Thyroid gland (tissue), 4 donors: ENCODE measurements at regions of chr7 and their contacts with region 1.

Region 1: DNA sequence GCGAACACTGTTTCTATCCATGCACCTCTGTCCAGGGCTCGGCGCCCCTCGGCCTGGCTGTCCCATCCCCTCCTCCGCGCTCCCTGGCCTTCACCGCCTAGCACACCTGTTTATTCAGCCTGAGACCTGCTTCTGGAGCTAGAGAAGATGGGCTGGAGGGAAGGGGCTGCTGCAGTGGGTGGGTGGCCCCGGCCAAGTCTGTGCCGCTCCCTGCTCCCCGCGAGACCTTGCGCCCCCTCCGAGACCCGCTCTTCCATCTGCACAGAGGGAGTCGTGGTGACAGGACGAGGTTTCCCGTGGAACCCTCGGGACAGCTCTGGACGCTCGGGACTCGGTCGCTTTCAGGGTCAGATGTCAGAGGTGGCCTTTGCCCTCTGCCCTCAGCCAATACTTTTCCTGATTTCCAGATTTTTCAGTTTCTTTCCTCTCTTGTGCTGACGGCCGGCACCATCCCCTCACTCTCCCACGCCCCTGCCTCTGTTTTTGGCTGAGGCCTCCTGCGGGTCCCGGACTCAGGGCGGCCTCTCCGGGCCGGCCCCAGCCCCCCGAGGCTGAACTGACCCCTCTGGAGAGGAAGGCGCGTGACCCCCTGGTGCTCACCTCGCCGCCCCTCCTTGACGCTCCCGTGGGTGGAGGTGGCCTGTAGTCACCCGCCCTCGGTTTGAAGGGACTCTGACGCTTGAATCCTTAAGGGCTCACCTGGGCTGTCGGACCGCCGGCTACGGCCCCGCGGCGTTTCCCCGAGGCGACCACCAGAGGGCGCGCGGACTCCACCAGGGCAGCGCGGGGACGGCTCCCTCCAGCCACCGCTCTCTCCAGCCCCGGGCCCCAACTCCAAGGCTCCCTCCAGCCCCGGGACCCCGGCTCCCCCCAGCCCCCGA is 15.6 kb downstream of the SHH start:
- DNase-seq: peak; percentile 63 to 64
- H3K4me3 ChIP-seq: no peak overlapping the region
- H3K27ac ChIP-seq: no peak overlapping the region
- H3K4me1 ChIP-seq: peaks cover 0 to 5% of the 10 kb centered on the region in 2 donors
- H3K27me3 ChIP-seq: no peaks in the 10 kb centered on the region
- CTCF ChIP-seq: peak; percentile 45 to 95 (median 81)
- POLR2A ChIP-seq: no peak

Region 2: GRCh38 chr7:155685070-155685790 is 111.4 kb before region 1 on chr7:
- intact Hi-C with region 1: no loop called
- DNase-seq: no peak
- H3K4me3 ChIP-seq: no peak overlapping the region
- H3K27ac ChIP-seq: no peak overlapping the region
- H3K4me1 ChIP-seq: no peaks in the 10 kb centered on the region
- H3K27me3 ChIP-seq: no peaks in the 10 kb centered on the region
- CTCF ChIP-seq: no peak
- POLR2A ChIP-seq: no peak

Region 3: DNA sequence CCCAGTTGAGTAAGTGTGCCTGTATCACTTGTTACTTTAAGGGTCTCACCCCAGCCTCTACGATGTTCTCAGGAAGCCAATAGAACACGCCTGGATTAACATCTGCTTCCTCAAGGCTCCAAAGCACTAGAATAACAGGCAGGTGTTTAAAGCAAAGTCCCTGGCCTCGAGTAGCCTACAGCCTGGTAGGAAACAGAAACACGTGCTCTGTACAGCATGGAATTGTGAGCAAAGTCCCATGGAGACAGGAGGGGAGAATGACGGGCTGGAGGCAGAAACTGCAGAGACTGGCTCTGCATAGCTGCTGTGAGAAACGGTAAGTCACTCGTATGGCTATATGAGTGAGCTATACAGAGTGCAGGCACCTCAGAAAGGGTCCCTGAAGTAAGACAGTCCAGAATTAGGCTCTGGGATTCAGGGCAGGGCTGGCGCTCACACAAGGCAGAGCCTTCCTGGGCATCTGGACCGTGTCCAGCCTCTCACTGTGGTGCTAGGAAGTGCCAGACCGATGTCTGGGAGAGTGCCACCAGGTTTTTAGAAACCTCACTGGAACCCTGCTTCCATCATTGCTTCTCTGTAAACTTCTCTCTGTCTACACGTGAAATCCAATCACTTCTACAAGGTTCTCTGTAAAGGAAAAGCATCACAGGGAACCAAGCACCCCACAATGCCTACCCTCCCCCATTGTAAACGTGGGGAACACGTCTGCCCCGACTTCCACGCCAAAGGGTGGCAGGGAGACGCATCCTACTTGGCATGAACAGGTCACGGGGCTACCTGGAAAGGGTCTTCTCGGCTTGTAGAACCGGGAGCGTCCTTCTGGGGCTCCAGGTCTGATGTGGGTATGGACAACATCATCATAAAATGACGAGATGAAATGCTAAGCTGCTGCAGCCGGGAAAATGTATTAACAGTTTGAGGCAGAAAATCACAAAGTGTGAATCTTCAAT is 54.4 kb after region 1 on chr7:
- intact Hi-C with region 1: no loop called
- DNase-seq: peak; percentile 17 to 28
- H3K4me3 ChIP-seq: no peak overlapping the region
- H3K27ac ChIP-seq: no peak overlapping the region
- H3K4me1 ChIP-seq: no peaks in the 10 kb centered on the region
- H3K27me3 ChIP-seq: no peaks in the 10 kb centered on the region
- CTCF ChIP-seq: no peak
- POLR2A ChIP-seq: no peak

Region 4: GRCh38 chr7:156473476-156474240 is 677.0 kb after region 1 on chr7:
- intact Hi-C with region 1: loop called (anchors 5 kb)
- DNase-seq: peak; percentile 66 to 74
- H3K4me3 ChIP-seq: no peak overlapping the region
- H3K27ac ChIP-seq: no peak overlapping the region
- H3K4me1 ChIP-seq: peaks cover 12 to 13% of the 10 kb centered on the region in 2 donors
- H3K27me3 ChIP-seq: no peaks in the 10 kb centered on the region
- CTCF ChIP-seq: peak in 5 of 6 experiments; percentile 34 to 79 (median 63)
- POLR2A ChIP-seq: no peak

Region 5: GRCh38 chr7:156764016-156764669 is 967.5 kb after region 1 on chr7:
- intact Hi-C with region 1: loop called (anchors 5 kb)
- DNase-seq: peak; percentile 74 to 78
- H3K4me3 ChIP-seq: no peak overlapping the region
- H3K27ac ChIP-seq: no peak overlapping the region
- H3K4me1 ChIP-seq: no peaks in the 10 kb centered on the region
- H3K27me3 ChIP-seq: no peaks in the 10 kb centered on the region
- CTCF ChIP-seq: peak in 5 of 6 experiments; percentile 33 to 87 (median 79)
- POLR2A ChIP-seq: no peak